Mucosa of descending colon (tissue), 3 donors: ENCODE measurements at regions of chr1 and their contacts with region 1.

Region 1: GRCh38 chr1:117067533-117068370 is 7.6 kb downstream of the TTF2 start:
- DNase-seq: peak in 2 of 3 donors; percentile 42 to 48
- ATAC-seq: peak; percentile 91
- H3K4me3 ChIP-seq: no peak overlapping the region
- H3K4me1 ChIP-seq: no peaks in the 10 kb centered on the region
- CTCF ChIP-seq: peak; percentile 55

Region 2: GRCh38 chr1:117128323-117129079 is 60.7 kb after region 1 on chr1:
- intact Hi-C with region 1: loop called (anchors 5 kb)
- DNase-seq: no peak
- ATAC-seq: no peak
- H3K4me3 ChIP-seq: no peak overlapping the region
- H3K4me1 ChIP-seq: no peaks in the 10 kb centered on the region
- CTCF ChIP-seq: no peak

Region 3: GRCh38 chr1:117250061-117250606 is 182.4 kb after region 1 on chr1:
- intact Hi-C with region 1: no loop called
- DNase-seq: no peak
- ATAC-seq: no peak
- H3K4me3 ChIP-seq: no peak overlapping the region
- H3K4me1 ChIP-seq: no peaks in the 10 kb centered on the region
- CTCF ChIP-seq: no peak

Region 4: DNA sequence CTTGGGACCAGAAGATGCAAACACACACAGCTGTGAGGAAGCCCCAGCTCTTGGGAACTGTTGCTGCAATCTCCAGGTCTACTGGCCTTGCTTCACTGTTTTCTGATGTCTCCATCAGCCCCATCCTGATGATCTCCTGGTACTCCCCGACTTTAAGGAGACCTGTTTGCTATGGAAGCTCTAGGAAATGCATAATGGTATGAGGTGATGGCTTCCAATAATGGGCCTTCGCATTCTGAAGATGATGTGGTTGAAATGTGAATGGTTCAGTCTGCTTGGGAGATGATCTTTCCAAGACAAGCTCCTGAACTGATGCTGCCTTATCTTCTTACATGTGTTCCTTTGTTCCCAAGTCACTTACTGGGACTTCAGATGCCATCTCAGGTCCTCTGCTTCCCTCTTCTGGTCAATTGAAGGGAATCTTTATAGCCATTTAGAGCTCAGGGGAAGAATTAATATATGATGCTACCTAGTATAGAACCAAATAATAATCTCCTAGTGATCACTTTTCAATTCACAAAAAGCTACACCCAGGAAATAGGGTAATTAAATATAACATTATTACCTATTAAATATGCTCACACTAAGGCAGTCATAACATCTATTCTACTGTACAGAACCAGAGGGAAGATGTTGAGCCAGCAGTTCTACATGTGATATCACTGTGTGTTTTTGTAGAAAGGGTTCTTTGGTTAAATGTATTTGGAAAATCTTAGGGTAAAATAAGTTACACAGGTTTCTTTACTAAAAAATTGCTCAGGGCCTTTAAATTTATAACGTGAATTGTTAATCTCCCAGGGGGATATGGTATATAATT is 216.9 kb after region 1 on chr1:
- intact Hi-C with region 1: loop called (anchors 5 to 10 kb)
- DNase-seq: peak in 1 of 3 donors; percentile 11
- ATAC-seq: peak; percentile 75
- H3K4me3 ChIP-seq: no peak overlapping the region
- H3K4me1 ChIP-seq: no peaks in the 10 kb centered on the region
- CTCF ChIP-seq: peak; percentile 15